Sciatic nerve (tissue), 2 donors: ENCODE measurements at regions of chr11 and their contacts with region 1.

Region 1: DNA sequence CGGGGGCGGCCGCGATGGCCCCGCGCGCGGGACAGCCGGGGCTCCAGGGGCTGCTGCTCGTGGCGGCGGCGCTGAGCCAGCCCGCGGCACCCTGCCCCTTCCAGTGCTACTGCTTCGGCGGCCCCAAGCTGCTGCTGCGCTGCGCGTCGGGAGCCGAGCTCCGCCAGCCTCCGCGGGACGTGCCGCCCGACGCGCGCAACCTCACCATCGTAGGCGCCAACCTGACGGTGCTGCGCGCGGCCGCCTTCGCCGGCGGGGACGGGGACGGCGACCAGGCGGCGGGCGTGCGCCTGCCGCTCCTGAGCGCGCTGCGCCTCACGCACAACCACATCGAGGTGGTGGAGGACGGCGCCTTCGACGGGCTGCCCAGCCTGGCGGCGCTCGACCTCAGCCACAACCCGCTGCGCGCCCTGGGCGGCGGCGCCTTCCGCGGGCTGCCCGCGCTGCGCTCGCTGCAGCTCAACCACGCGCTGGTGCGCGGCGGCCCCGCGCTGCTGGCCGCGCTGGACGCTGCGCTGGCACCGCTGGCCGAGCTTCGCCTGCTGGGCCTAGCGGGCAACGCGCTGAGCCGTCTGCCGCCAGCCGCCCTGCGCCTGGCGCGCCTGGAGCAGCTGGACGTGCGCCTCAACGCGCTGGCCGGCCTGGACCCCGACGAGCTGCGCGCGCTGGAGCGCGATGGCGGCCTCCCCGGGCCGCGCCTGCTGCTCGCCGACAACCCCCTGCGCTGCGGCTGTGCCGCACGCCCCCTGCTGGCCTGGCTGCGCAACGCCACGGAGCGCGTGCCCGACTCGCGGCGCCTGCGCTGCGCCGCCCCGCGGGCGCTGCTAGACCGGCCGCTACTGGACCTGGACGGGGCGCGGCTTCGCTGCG is 697 bp downstream of the TPBGL start:
- DNase-seq: peak; percentile 90
- ATAC-seq: peak; percentile 78

Region 2: DNA sequence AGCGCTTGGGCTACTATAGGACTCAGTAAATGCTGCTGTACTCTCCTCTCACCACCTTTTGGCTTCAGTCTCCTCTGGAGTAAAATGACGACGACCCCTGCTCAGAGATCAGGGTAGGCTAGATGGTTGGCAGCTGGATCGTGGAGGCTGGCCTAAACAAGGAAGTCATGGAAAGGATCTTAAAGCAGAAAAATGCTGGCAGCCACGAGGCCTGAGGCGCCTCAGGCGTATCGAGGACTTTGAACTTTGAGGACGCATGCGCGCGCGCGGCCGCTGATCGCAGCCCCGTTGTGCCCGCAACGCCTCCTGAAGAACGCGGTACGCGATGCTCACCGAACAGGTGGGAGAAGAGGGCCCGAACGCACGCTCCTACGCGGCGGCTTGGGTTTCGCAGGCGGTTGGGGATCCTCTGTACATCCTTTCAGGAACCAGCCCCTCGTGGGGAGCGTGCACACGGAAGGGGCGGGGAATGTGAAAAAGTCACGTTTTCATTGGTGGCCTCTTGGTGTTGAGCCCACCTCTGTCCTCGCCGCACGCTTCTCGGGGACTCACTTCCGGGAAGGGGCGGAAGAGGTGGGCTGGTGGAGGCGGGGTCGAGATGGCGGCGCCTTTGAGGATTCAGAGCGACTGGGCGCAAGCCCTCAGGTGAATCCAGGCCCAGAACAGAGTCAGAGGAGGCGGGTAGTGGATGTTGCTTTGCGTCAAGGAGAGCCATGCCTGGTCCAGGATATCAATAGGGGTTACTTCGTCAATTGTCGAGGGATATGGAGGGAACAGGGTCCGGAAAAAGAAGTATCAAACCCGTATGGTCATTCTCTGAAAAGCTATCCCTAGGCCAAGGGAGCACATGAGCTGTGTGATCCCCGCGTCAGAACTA is 1364.6 kb before region 1 on chr11 and contains the starts of genes COA4 and PAAF1:
- intact Hi-C with region 1: no loop called
- DNase-seq: peak; percentile 96
- ATAC-seq: peak; percentile 100
- total RNA-seq, gene COA4: 37.5 TPM
- total RNA-seq, gene PAAF1: 32.4 TPM

Region 3: GRCh38 chr11:74929431-74930363 is 311.6 kb before region 1 on chr11:
- intact Hi-C with region 1: loop called (anchors 10 kb)
- DNase-seq: peak; percentile 76
- ATAC-seq: peak; percentile 77

Region 4: GRCh38 chr11:75014129-75014528 is 227.1 kb before region 1 on chr11:
- intact Hi-C with region 1: loop called (anchors 10 kb)
- DNase-seq: no peak
- ATAC-seq: no peak

Region 5: DNA sequence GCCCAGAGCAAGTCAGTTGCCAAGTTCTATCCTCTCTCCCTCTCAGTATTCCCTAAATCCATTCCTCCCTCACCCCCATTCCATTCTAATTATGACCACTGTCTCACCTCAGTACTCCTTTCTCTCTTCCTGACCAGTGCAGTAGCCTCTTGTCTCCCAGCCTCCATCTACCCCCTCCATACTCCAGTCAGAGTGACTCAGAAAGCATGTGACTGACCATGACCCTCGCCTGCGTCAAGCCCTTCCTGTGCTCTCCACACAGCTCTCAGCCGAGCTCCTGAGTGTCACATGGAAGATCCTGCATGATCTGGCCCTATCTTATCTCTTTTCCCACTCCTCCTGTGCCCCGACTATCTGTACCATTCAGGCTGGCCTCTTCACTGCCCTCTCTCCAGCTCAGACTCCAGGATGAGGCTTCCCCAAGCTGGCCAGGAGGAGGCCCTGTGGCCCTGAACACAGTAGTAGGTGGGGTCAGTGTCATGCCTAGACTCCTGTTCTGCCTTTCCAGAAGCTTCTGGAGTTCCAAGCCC is 210.0 kb before region 1 on chr11:
- intact Hi-C with region 1: no loop called
- DNase-seq: no peak
- ATAC-seq: peak; percentile 52

Region 6: GRCh38 chr11:75142714-75143419 is 98.4 kb before region 1 on chr11:
- intact Hi-C with region 1: loop called (anchors 10 kb)
- DNase-seq: peak; percentile 83
- ATAC-seq: peak; percentile 95